ENCODE measurements at regions of chr14 and their contacts with region 1.

Region 1: GRCh38 chr14:106228541-106229158 is 702.3 kb downstream of the TMEM121 start:
- DNase-seq: peak; percentile 78
- H3K4me3 Mint-ChIP-seq: peak overlapping the region; percentile 73
- H3K27ac Mint-ChIP-seq: peak overlapping the region; percentile 91
- H3K4me1 Mint-ChIP-seq: peaks cover 68% of the 10 kb centered on the region
- H3K27me3 Mint-ChIP-seq: no peaks in the 10 kb centered on the region

Region 2: GRCh38 chr14:106185837-106186233 is 42.8 kb before region 1 on chr14:
- CTCF ChIA-PET with region 1: interaction called, 5 read pairs
- intact Hi-C with region 1: loop called (anchors 5 kb)
- DNase-seq: peak; percentile 88
- H3K4me3 Mint-ChIP-seq: no peak overlapping the region
- H3K27ac Mint-ChIP-seq: no peak overlapping the region
- H3K4me1 Mint-ChIP-seq: peaks cover 31% of the 10 kb centered on the region
- H3K27me3 Mint-ChIP-seq: no peaks in the 10 kb centered on the region

Region 3: GRCh38 chr14:106210652-106211051 is 18.0 kb before region 1 on chr14:
- CTCF ChIA-PET with region 1: interaction called, 36 read pairs
- intact Hi-C with region 1: no loop called
- DNase-seq: peak; percentile 77
- H3K4me3 Mint-ChIP-seq: no peak overlapping the region
- H3K27ac Mint-ChIP-seq: no peak overlapping the region
- H3K4me1 Mint-ChIP-seq: peaks cover 21% of the 10 kb centered on the region
- H3K27me3 Mint-ChIP-seq: no peaks in the 10 kb centered on the region

Region 4: GRCh38 chr14:106327234-106327633 is 98.6 kb after region 1 on chr14:
- CTCF ChIA-PET with region 1: no interaction called
- intact Hi-C with region 1: no loop called
- DNase-seq: no peak
- H3K4me3 Mint-ChIP-seq: no peak overlapping the region
- H3K27ac Mint-ChIP-seq: no peak overlapping the region
- H3K4me1 Mint-ChIP-seq: no peaks in the 10 kb centered on the region
- H3K27me3 Mint-ChIP-seq: no peaks in the 10 kb centered on the region

Region 5: DNA sequence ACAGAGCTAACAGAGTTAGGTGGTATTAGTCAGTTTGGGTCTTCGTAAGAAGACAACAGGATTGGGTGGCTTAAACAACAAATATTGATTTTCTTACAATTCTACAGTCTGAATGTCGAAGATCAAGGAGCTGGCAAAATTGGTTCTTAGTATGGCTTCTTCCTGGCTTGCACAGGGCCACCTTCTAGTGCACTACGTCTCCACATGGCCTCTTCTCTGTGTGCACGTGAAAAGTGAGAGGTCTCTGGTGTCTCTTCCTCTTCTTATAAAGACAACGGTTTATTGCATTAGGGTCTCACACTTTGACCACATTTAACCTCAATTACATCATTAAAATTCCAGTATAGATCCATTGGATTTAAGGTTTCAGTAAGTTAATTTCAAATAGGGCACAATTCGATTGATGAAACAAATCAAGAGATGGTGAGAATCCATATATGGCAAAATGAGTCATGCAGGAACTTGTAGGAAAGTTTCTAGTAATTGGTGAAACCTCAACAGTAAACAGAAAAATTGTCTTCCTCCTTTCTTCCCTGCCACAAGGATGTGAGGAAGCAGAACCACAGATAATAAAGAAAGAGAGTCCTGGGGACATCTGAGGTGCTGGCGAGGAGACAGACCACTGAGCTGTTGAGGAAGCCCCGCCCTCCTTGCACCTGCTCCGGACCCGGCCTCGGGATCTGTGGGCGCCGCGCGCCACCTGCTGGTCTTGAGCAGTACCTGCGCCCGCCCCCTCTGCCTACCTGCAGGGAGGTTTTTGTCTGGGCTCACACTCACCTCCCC is 144.4 kb after region 1 on chr14:
- CTCF ChIA-PET with region 1: interaction called, 3 read pairs
- intact Hi-C with region 1: loop called (anchors 5 kb)
- DNase-seq: peak; percentile 90
- H3K4me3 Mint-ChIP-seq: peak overlapping the region; percentile 69
- H3K27ac Mint-ChIP-seq: peak overlapping the region; percentile 65
- H3K4me1 Mint-ChIP-seq: peaks cover 22% of the 10 kb centered on the region
- H3K27me3 Mint-ChIP-seq: no peaks in the 10 kb centered on the region

Region 6: GRCh38 chr14:106511006-106511799 is 282.6 kb after region 1 on chr14:
- CTCF ChIA-PET with region 1: no interaction called
- intact Hi-C with region 1: loop called (anchors 2 kb)
- DNase-seq: peak; percentile 72
- H3K4me3 Mint-ChIP-seq: no peak overlapping the region
- H3K27ac Mint-ChIP-seq: peak overlapping the region; percentile 16
- H3K4me1 Mint-ChIP-seq: peaks cover 76% of the 10 kb centered on the region
- H3K27me3 Mint-ChIP-seq: no peaks in the 10 kb centered on the region